WTC11 (cell line): ENCODE measurements at regions of chr6 and their contacts with region 1.

Region 1: GRCh38 chr6:4848382-4849068 is 72.3 kb downstream of the CDYL start:
- DNase-seq: peak; percentile 54
- ATAC-seq: peak; percentile 81
- H3K4me3 Mint-ChIP-seq: no peak overlapping the region
- H3K27ac Mint-ChIP-seq: 0 out of 2 replicates have a peak overlapping the region, but pooled peaks have one; percentile 5
- H3K4me1 Mint-ChIP-seq: peaks cover 56% of the 10 kb centered on the region
- H3K27me3 Mint-ChIP-seq: no peaks in the 10 kb centered on the region
- CTCF ChIP-seq: no peak; the same call in 1 of the 2 replicates

Region 2: DNA sequence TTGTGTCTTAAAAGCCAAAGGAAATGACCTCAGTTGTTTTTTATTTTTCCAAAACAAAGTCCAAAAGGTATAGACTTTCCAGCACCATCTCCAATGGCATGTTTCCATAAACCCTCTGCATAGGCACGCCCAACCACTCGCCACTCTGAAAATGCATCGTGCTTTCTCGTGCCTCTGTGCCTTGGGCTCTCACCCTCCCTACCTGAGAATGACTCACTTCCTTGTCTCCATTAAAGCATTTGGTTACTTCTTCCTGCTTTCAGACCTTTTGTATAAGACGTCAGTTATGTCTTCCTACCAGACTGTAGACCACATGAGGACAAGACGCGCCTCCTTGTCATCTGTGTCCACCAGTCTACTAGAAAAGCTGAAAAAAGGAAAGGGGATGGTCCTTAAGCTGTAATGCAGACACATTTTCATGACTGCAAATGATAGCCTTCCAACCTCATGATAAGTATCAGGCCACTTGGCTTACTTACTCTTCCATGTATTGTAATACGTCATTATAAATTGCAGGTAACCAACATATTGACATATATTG is 133.5 kb before region 1 on chr6:
- CTCF ChIA-PET with region 1: interaction called, 10 read pairs
- POLR2A ChIA-PET with region 1: no interaction called
- DNase-seq: no peak
- ATAC-seq: no peak
- H3K4me3 Mint-ChIP-seq: no peak overlapping the region
- H3K27ac Mint-ChIP-seq: peak overlapping the region; percentile 15; the same call in 1 of the 2 replicates
- H3K4me1 Mint-ChIP-seq: peaks cover 18% of the 10 kb centered on the region
- H3K27me3 Mint-ChIP-seq: no peaks in the 10 kb centered on the region
- CTCF ChIP-seq: no peak